Sigmoid colon (tissue), 7 donors: ENCODE measurements at regions of chr1 and their contacts with region 1.

Region 1: DNA sequence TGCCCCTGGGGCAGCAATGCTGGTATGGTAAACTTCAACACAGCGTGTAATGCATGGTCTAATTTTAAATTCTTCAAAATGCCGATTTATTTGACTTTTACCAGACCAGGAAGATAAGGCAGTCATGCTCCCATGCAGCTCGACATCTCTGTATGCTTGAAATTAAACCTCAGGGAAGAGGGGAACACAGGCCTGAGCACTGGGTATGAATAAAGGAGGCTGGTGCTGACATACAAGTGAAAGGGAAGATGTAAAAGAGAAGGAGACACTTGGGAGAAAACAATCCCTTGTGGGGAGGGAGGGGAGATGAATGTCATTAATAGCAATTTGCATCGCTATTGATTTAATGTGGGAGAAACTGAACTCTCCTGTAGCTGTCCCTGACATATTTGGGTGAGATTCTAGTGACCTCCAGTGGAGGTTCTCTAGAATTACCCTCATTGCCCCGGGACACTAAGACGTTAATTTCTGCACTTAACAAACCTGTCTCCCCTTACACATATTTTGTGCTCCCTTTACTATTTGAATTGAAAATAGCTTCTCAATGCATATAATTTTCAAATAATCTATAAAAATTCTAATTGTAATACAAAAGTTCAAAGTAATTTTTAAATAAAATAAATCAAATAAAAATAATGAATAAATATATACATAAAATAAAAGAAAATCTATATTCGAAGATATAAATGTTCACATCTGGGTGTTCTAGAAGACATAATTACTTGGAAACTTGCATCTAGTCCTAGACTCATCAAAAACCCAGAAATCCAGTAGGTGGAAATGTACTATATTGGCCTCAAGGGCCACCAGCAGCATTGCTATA is 283.1 kb downstream of the LMX1A start:
- DNase-seq: no peak
- H3K4me3 ChIP-seq: no peak overlapping the region
- H3K27ac ChIP-seq: peak overlapping the region in 3 of 4 donors; percentile 19 to 46 (median 42)
- H3K4me1 ChIP-seq: peaks cover 0 to 43% (median 19%) of the 10 kb centered on the region in 4 donors
- H3K27me3 ChIP-seq: no peaks in the 10 kb centered on the region
- CTCF ChIP-seq: peak; percentile 65 to 80 (median 78)
- EP300 ChIP-seq: no peak
- POLR2A ChIP-seq: no peak

Region 2: GRCh38 chr1:163399976-163400601 is 1673.3 kb before region 1 on chr1:
- intact Hi-C with region 1: loop called (anchors 10 kb)
- DNase-seq: no peak
- H3K4me3 ChIP-seq: no peak overlapping the region
- H3K27ac ChIP-seq: peak overlapping the region in 1 of 4 donors; percentile 36
- H3K4me1 ChIP-seq: peaks cover 0 to 30% (median 0%) of the 10 kb centered on the region in 4 donors
- H3K27me3 ChIP-seq: no peaks in the 10 kb centered on the region
- CTCF ChIP-seq: no peak
- EP300 ChIP-seq: no peak
- POLR2A ChIP-seq: no peak

Region 3: GRCh38 chr1:163813251-163813650 is 1260.1 kb before region 1 on chr1:
- intact Hi-C with region 1: loop called (anchors 10 kb)
- DNase-seq: no peak
- H3K4me3 ChIP-seq: no peak overlapping the region
- H3K27ac ChIP-seq: no peak overlapping the region
- H3K4me1 ChIP-seq: no peaks in the 10 kb centered on the region
- H3K27me3 ChIP-seq: no peaks in the 10 kb centered on the region
- CTCF ChIP-seq: no peak
- EP300 ChIP-seq: no peak
- POLR2A ChIP-seq: no peak

Region 4: GRCh38 chr1:163866564-163866963 is 1206.8 kb before region 1 on chr1:
- intact Hi-C with region 1: no loop called
- DNase-seq: no peak
- H3K4me3 ChIP-seq: no peak overlapping the region
- H3K27ac ChIP-seq: peak overlapping the region in 2 of 4 donors; percentile 15 to 24
- H3K4me1 ChIP-seq: peaks cover 0 to 3% (median 0%) of the 10 kb centered on the region in 4 donors
- H3K27me3 ChIP-seq: no peaks in the 10 kb centered on the region
- CTCF ChIP-seq: no peak
- EP300 ChIP-seq: peak in 1 of 4 donors; percentile 21
- POLR2A ChIP-seq: no peak

Region 5: DNA sequence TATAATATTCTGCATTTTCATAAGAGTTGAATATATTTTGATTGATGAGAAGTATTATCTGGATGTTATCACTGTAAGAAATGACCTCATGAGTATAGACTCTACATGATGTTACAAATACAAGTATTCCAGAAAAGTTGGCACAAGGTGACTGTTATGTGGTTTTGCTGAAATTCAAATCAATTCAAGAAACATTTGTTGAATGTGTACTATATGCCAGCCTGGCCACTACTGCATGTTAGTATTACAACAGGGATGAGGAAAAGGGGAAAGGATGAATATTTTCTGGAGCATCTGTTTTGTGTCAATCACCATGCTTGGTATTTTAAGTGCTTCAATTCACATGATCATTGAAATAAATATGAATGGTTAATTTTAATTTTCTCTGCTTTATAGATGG is 765.3 kb before region 1 on chr1:
- intact Hi-C with region 1: loop called (anchors 10 kb)
- DNase-seq: no peak
- H3K4me3 ChIP-seq: no peak overlapping the region
- H3K27ac ChIP-seq: no peak overlapping the region
- H3K4me1 ChIP-seq: peaks cover 0 to 10% (median 0%) of the 10 kb centered on the region in 4 donors
- H3K27me3 ChIP-seq: no peaks in the 10 kb centered on the region
- CTCF ChIP-seq: no peak
- EP300 ChIP-seq: no peak
- POLR2A ChIP-seq: no peak

Region 6: GRCh38 chr1:164644774-164645235 is 428.6 kb before region 1 on chr1:
- intact Hi-C with region 1: loop called (anchors 10 kb)
- DNase-seq: no peak
- H3K4me3 ChIP-seq: no peak overlapping the region
- H3K27ac ChIP-seq: peak overlapping the region; percentile 67 to 86 (median 82)
- H3K4me1 ChIP-seq: peaks cover 0 to 92% (median 91%) of the 10 kb centered on the region in 4 donors
- H3K27me3 ChIP-seq: no peaks in the 10 kb centered on the region
- CTCF ChIP-seq: no peak
- EP300 ChIP-seq: peak in 3 of 4 donors; percentile 30 to 79 (median 67)
- POLR2A ChIP-seq: no peak

Region 7: GRCh38 chr1:164786980-164787833 is 286.2 kb before region 1 on chr1:
- intact Hi-C with region 1: loop called (anchors 5 kb)
- DNase-seq: peak; percentile 95
- H3K4me3 ChIP-seq: no peak overlapping the region
- H3K27ac ChIP-seq: peak overlapping the region; percentile 72 to 87 (median 77)
- H3K4me1 ChIP-seq: peaks cover 0 to 92% (median 86%) of the 10 kb centered on the region in 4 donors
- H3K27me3 ChIP-seq: no peaks in the 10 kb centered on the region
- CTCF ChIP-seq: peak; percentile 85 to 93 (median 88)
- EP300 ChIP-seq: no peak
- POLR2A ChIP-seq: no peak

Region 8: GRCh38 chr1:164999146-164999545 is 74.2 kb before region 1 on chr1:
- intact Hi-C with region 1: no loop called
- DNase-seq: no peak
- H3K4me3 ChIP-seq: no peak overlapping the region
- H3K27ac ChIP-seq: no peak overlapping the region
- H3K4me1 ChIP-seq: no peaks in the 10 kb centered on the region
- H3K27me3 ChIP-seq: no peaks in the 10 kb centered on the region
- CTCF ChIP-seq: no peak
- EP300 ChIP-seq: no peak
- POLR2A ChIP-seq: no peak

Region 9: DNA sequence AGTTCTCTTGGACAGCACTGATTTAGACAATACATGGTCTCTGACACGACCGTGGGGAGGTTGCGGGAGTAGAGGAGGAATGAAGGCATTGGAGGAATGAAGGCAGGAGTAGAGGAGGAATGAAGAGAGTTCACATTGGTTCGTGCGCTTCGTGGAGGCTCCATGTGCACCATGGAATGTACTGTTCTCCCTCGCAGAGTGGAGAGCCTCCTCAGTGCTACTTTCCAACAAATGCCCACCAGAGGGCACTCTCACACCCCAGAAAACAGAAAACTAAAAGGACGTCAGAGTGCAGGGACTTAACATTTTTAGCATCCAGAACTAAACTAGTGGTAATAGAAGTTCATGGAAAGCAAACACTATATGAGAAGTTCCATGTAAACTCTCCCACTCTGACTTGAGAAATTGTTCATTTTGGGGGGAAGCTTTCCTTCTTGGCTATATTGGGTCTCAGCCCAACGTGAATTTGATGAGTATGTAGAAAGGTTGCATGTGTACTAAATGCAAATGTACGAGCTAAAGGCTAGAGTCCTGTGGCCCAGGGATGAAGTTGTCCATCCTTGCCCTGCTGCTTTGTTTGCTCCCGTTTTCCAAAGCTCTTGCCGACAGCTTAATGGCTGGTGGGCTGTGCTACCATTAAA is 71.5 kb after region 1 on chr1:
- intact Hi-C with region 1: no loop called
- DNase-seq: no peak
- H3K4me3 ChIP-seq: no peak overlapping the region
- H3K27ac ChIP-seq: no peak overlapping the region
- H3K4me1 ChIP-seq: no peaks in the 10 kb centered on the region
- H3K27me3 ChIP-seq: peaks cover 0 to 15% (median 0%) of the 10 kb centered on the region in 3 donors
- CTCF ChIP-seq: peak in 3 of 4 experiments; percentile 19 to 71 (median 28)
- EP300 ChIP-seq: no peak
- POLR2A ChIP-seq: no peak

Region 10: GRCh38 chr1:165173409-165173808 is 100.0 kb after region 1 on chr1:
- intact Hi-C with region 1: no loop called
- DNase-seq: no peak
- H3K4me3 ChIP-seq: no peak overlapping the region
- H3K27ac ChIP-seq: no peak overlapping the region
- H3K4me1 ChIP-seq: no peaks in the 10 kb centered on the region
- H3K27me3 ChIP-seq: no peaks in the 10 kb centered on the region
- CTCF ChIP-seq: no peak
- EP300 ChIP-seq: no peak
- POLR2A ChIP-seq: no peak